ENCODE measurements at regions of chr1 and their contacts with region 1.

Region 1: GRCh38 chr1:154324669-154325582 is at the start of gene ATP8B2:
- DNase-seq: peak; percentile 72 to 77 (median 72)
- ATAC-seq: peak; percentile 68 to 74 (median 72)
- H3K4me3 ChIP-seq: peak within 1 kb of the TSS; percentile 36 to 41 (median 38)
- H3K27ac ChIP-seq: peak within 1 kb of the TSS; percentile 40 to 76 (median 40)
- H3K4me1 ChIP-seq: peaks cover 0 to 14% (median 2%) of the 10 kb centered on the region in 4 donors
- H3K27me3 ChIP-seq: no peaks in the 10 kb centered on the region
- CTCF ChIP-seq: peak; percentile 71 to 92 (median 88)
- POLR2A ChIP-seq: no peak
- total RNA-seq, gene ATP8B2: 1.9 to 8.2 (median 3.2) TPM

Region 2: GRCh38 chr1:154272217-154272998 is 52.5 kb before region 1 on chr1 and contains the start of gene HAX1:
- intact Hi-C with region 1: loop called in 1 of 2 experiments (anchors 10 kb)
- DNase-seq: peak; percentile 94
- ATAC-seq: peak; percentile 92 to 96 (median 95)
- H3K4me3 ChIP-seq: peak within 1 kb of the TSS; percentile 81 to 90 (median 88)
- H3K27ac ChIP-seq: peak within 1 kb of the TSS; percentile 82 to 86 (median 84)
- H3K4me1 ChIP-seq: peaks cover 0 to 5% (median 2%) of the 10 kb centered on the region in 4 donors
- H3K27me3 ChIP-seq: no peaks in the 10 kb centered on the region
- CTCF ChIP-seq: peak; percentile 78 to 94 (median 82)
- POLR2A ChIP-seq: peak; percentile 62
- total RNA-seq, gene HAX1: 40.2 to 82.0 (median 44.9) TPM

Region 3: GRCh38 chr1:154404984-154405761 is 80.2 kb after region 1 on chr1 and contains the start of gene IL6R:
- intact Hi-C with region 1: no loop called
- DNase-seq: peak; percentile 95 to 96 (median 95)
- ATAC-seq: peak; percentile 59 to 73 (median 68)
- H3K4me3 ChIP-seq: peak within 1 kb of the TSS; percentile 79 to 95 (median 91)
- H3K27ac ChIP-seq: peak within 1 kb of the TSS; percentile 98 to 99 (median 98)
- H3K4me1 ChIP-seq: peaks cover 0 to 37% (median 13%) of the 10 kb centered on the region in 4 donors
- H3K27me3 ChIP-seq: no peaks in the 10 kb centered on the region
- CTCF ChIP-seq: peak in 3 of 4 donors; percentile 37 to 45 (median 37)
- POLR2A ChIP-seq: peak; percentile 91
- total RNA-seq, gene IL6R: 32.2 to 145 (median 68.2) TPM

Measured in right lobe of liver (tissue), 6 donors.